Calu3 (cell line): ENCODE measurements at regions of chr21 and their contacts with region 1.

Region 1: GRCh38 chr21:15140321-15141019 is 75.7 kb upstream of the NRIP1 start:
- DNase-seq: peak; percentile 53
- H3K4me3 Mint-ChIP-seq: peak overlapping the region; percentile 62
- H3K27ac Mint-ChIP-seq: peak overlapping the region; percentile 80
- H3K4me1 Mint-ChIP-seq: peaks cover 58% of the 10 kb centered on the region
- H3K27me3 Mint-ChIP-seq: no peaks in the 10 kb centered on the region
- CTCF ChIP-seq: no peak

Region 2: GRCh38 chr21:15221799-15222386 is 81.4 kb after region 1 on chr21:
- CTCF ChIA-PET with region 1: no interaction called
- intact Hi-C with region 1: loop called (anchors 5 kb)
- DNase-seq: peak; percentile 6
- H3K4me3 Mint-ChIP-seq: no peak overlapping the region
- H3K27ac Mint-ChIP-seq: no peak overlapping the region
- H3K4me1 Mint-ChIP-seq: peaks cover 30% of the 10 kb centered on the region
- H3K27me3 Mint-ChIP-seq: no peaks in the 10 kb centered on the region
- CTCF ChIP-seq: no peak

Region 3: DNA sequence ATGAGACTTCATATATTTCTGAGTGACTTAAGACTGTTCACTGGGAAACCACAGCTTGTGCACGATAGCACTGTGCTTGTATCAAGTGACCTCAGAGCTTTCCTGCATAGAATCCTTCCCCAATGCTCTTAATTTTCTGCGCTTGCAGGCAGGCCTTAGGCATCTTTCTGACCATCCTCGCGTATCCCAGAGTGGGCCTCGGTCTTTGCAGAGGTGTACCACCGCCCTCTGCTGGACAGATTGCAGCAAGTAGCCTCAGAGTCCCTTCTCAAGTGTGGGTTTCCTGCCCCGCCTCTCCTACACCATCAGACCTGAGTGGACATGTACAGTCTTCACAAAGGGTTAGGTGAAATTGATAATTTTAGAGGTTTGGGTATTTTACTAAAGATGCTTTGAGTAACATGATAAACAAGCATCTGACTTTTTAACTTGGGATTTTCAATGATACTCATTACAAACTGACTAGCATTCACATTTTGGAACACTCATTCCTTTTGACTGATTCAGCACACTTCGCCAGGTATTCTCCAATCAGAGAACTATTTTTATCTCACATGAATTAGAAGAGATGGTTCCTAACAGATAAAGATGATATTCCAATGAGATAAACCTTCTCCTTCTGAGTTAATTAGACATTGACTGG is 342.8 kb after region 1 on chr21:
- CTCF ChIA-PET with region 1: interaction called, 4 read pairs
- intact Hi-C with region 1: loop called (anchors 5 kb)
- DNase-seq: peak; percentile 83
- H3K4me3 Mint-ChIP-seq: no peak overlapping the region
- H3K27ac Mint-ChIP-seq: no peak overlapping the region
- H3K4me1 Mint-ChIP-seq: no peaks in the 10 kb centered on the region
- H3K27me3 Mint-ChIP-seq: no peaks in the 10 kb centered on the region
- CTCF ChIP-seq: peak; percentile 75